ENCODE measurements at regions of chr10 and their contacts with region 1.

Region 1: DNA sequence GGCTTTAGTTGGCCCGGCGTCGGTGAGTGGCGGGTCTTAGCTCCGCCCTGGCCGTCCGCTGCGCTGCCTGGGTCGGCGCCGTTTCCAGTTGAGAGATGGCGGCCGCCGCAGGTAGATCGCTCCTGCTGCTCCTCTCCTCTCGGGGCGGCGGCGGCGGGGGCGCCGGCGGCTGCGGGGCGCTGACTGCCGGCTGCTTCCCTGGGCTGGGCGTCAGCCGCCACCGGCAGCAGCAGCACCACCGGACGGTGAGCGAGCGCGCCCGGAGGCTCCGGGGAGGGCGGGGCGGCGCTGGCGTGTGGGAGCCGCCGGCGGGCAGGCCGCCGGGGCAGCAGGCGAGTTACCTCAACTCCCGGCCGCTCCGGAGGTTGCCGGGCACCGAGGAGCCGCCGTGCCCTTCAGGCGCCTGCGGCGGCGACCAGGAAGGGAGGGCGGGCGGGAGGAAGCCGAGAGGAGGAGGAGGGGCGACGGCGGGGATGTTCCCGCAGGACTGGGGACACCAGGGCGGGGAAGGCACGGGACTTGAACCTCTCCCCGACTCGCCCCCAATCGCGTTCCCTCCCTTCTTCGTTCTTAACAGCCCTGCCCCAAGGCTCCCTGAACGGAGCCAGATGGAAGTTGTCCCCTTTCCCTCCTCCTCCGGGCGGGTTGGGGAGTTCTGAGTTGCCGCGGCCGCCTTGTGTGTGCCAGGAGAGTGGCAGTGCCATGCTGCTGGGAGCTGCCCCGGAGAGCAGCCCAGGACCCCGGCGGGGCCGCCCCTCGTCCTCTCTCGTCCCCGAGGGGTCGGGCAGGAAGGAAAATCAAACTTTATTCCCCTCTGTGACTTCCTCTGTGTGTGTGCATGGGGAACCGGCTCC is at the start of gene MCU:
- DNase-seq: peak; percentile 96 to 97
- ATAC-seq: peak; percentile 53 to 70
- H3K4me3 ChIP-seq: peak within 1 kb of the TSS; percentile 79 to 94 (median 84)
- H3K27ac ChIP-seq: peak within 1 kb of the TSS; percentile 89 to 96 (median 92)
- H3K4me1 ChIP-seq: peaks cover 43 to 55% of the 10 kb centered on the region in 2 donors
- H3K27me3 ChIP-seq: no peaks in the 10 kb centered on the region
- CTCF ChIP-seq: no peak
- POLR2A ChIP-seq: peak; percentile 87 to 95
- total RNA-seq, gene MCU: 25.1 to 61.3 (median 49.0) TPM

Region 2: DNA sequence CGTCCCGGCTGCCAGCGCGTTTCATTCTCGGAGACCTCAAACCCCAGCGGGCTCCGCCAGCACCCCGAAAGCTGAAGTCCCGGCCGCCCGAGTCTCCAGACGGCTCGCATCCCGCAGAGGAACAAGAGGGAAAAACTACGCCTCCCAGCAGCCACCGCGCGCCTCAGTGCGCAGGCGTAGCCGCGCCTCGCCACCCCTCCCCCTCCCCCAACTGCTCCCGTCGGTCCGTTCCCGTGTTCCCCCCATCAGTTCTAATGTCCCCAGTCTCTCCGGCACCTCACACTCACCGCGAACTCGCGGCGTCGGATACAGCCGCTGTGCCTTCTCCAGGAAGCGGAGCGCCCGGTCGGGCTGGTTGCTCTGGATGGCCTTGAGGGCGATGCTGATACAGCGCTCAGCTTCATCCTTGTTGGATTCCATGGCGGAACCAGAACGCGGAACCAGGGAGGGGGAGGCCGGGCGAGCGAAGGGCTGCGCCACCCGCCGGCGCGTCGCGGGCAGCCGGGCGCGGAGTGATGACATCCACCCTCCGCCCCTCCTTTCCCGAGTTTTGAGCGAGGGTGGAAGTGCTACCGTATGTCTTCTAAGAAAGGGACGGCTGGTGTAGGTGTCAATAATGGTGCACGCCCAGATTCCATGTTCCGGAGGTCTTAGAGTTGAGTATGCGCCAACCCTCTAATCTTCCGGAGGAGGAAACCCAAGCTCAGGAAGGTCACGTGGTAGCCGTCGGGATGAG is 337.6 kb before region 1 on chr10 and contains the start of gene DNAJB12:
- in situ Hi-C with region 1: loop called in 3 of 4 experiments (anchors 25 kb)
- intact Hi-C with region 1: loop called (anchors 5 kb)
- DNase-seq: peak; percentile 75 to 85
- ATAC-seq: peak; percentile 85 to 87
- H3K4me3 ChIP-seq: peak within 1 kb of the TSS; percentile 83 to 95 (median 86)
- H3K27ac ChIP-seq: peak within 1 kb of the TSS; percentile 93 to 100 (median 98)
- H3K4me1 ChIP-seq: peaks cover 20 to 24% of the 10 kb centered on the region in 2 donors
- H3K27me3 ChIP-seq: no peaks in the 10 kb centered on the region
- CTCF ChIP-seq: peak in 1 of 5 experiments; percentile 13
- POLR2A ChIP-seq: peak; percentile 74 to 81
- total RNA-seq, gene DNAJB12: 35.8 to 49.7 (median 39.0) TPM

Region 3: DNA sequence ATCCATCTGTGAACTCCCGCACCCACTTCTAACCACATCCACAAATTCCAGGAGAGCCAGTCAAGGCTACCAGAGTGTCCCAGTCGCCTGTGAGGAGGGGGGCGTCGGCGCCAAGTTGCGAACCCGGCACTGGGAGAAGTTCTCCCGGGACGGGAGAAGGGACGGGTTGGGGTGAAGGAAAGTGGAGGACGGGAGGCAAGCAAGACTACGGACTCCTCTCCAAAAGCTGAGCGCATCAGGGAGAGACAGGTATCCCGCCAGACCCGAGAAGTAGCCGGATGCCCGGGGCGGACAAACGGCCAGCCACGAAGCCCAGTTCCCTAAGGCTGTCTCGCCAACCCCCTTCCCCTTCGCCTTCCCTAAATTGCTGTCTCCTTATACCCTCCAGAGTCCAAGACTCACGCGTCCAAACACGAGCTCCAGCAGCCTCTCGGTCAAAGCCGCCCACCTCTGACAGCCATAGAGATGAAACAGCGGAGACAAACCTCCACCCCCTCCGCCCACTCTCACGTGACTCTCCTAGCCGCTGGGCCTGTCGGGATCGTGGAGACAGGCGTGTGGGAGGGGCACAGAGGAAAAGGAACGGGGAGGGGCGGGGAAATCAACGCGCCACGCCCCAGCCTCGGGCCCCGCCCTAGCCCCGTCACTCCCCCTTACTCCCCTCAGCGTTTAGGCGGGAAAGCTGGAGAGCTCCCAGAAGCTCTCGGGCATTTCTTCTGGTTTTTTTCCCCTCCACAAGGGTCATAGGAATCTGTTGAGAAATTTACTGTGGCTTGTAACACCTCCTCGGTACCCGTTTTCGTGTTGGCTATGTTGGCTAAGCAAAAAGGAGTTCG is 66.5 kb before region 1 on chr10 and contains the start of gene MICU1:
- in situ Hi-C with region 1: loop called in 1 of 4 experiments (anchors 10 kb)
- intact Hi-C with region 1: loop called (anchors 2 kb)
- DNase-seq: peak; percentile 96
- ATAC-seq: peak; percentile 98 to 99
- H3K4me3 ChIP-seq: peak within 1 kb of the TSS; percentile 67 to 97 (median 92)
- H3K27ac ChIP-seq: peak within 1 kb of the TSS; percentile 85 to 93 (median 91)
- H3K4me1 ChIP-seq: peaks cover 17 to 18% of the 10 kb centered on the region in 2 donors
- H3K27me3 ChIP-seq: no peaks in the 10 kb centered on the region
- CTCF ChIP-seq: peak in 1 of 5 experiments; percentile 9
- POLR2A ChIP-seq: peak; percentile 83 to 86
- total RNA-seq, gene MICU1: 42.7 to 62.2 (median 51.9) TPM

Region 4: DNA sequence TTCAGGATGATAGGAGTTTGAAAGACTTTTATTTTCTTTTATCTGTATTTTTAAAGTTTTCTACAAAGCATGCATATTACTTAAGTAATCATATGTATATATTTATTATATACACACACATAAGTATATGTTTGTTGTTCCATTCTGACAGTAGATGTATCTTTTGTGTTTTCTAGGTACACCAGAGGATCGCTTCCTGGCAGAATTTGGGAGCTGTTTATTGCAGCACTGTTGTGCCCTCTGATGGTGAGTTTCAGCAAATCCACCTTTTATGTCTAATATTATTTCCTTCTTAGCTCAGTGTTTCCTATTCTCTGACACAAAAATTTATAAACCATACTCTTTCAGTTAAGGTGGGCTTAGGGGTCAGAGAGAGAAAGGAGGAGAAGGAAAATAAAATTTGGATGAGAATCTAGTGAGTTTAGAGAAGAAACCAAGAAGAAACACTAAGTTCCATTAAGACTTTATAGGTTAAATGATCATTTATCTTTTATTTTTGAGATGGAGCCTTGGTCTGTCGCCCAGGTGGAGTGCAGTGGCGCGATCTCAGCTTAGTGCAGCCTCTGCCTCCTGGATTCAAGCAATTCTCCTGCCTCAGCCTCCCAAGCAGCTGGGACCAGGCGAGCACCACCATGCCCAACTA is 142.0 kb after region 1 on chr10:
- in situ Hi-C with region 1: loop called in 2 of 4 experiments (anchors 5 kb)
- intact Hi-C with region 1: loop called (anchors 1 kb)
- DNase-seq: peak; percentile 32 to 37
- ATAC-seq: peak; percentile 68 to 82
- H3K4me3 ChIP-seq: no peak overlapping the region
- H3K27ac ChIP-seq: no peak overlapping the region
- H3K4me1 ChIP-seq: peaks cover 40 to 44% of the 10 kb centered on the region in 2 donors
- H3K27me3 ChIP-seq: no peaks in the 10 kb centered on the region
- CTCF ChIP-seq: peak; percentile 62 to 69 (median 64)
- POLR2A ChIP-seq: no peak

Region 5: DNA sequence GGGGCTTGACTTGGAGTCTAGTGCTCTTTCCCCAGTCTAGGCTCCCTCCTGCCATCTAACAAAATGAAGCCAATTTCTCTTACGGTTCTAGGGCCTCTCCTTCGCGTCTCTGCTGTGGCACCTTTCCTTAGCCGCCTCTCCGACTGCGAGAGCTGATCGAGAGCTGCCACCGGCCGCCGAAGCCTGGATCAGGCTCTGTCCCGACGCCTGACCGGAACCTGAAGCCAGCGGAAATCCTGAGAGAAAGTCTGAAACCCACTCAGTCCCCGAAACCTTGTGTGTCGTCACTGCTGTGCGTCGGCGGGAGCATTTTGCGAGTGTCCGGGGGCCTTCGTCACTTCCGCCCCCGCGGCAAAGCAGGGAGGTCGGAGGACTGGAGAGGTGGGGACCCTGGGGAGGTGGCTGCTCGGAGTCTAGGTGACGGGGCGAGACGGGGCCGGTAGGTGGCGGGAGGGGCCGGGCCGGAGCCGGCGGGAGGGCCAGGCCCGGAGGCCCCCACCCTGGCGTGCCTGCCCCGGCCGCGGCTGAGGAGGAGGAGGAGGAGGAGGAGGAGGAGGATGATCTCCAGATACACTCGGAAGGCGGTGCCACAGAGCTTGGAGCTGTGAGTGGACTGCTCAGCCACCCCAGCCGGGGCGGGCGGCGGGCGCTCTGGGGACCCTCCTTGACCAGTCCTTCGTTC is 475.6 kb after region 1 on chr10 and contains the starts of genes ECD and FAM149B1:
- in situ Hi-C with region 1: no loop called
- intact Hi-C with region 1: loop called (anchors 5 kb)
- DNase-seq: peak; percentile 86 to 92
- ATAC-seq: peak; percentile 98
- H3K4me3 ChIP-seq: peak within 1 kb of the TSS; percentile 78 to 96 (median 83)
- H3K27ac ChIP-seq: peak within 1 kb of the TSS; percentile 93 to 97 (median 94)
- H3K4me1 ChIP-seq: peaks cover 26 to 37% of the 10 kb centered on the region in 2 donors
- H3K27me3 ChIP-seq: no peaks in the 10 kb centered on the region
- CTCF ChIP-seq: peak; percentile 28 to 62 (median 42)
- POLR2A ChIP-seq: peak; percentile 92 to 96
- total RNA-seq, gene ECD: 11.0 to 22.8 (median 18.6) TPM
- total RNA-seq, gene FAM149B1: 2.2 to 6.9 (median 5.6) TPM